Left colon (tissue), 2 donors: ENCODE measurements at regions of chr22 and their contacts with region 1.

Region 1: GRCh38 chr22:31107178-31107893 is at the start of gene SELENOM:
- DNase-seq: peak; percentile 94 to 98
- ATAC-seq: peak; percentile 94
- total RNA-seq, gene SELENOM: 24.3 to 64.4 TPM

Region 2: GRCh38 chr22:31148953-31149627 is 41.8 kb after region 1 on chr22:
- intact Hi-C with region 1: loop called in 1 of 2 experiments (anchors 5 kb)
- DNase-seq: peak; percentile 66 to 69
- ATAC-seq: peak; percentile 89